Naive thymus-derived CD4-positive, alpha-beta T cell (primary cell): ENCODE measurements at regions of chr3 and their contacts with region 1.

Region 1: DNA sequence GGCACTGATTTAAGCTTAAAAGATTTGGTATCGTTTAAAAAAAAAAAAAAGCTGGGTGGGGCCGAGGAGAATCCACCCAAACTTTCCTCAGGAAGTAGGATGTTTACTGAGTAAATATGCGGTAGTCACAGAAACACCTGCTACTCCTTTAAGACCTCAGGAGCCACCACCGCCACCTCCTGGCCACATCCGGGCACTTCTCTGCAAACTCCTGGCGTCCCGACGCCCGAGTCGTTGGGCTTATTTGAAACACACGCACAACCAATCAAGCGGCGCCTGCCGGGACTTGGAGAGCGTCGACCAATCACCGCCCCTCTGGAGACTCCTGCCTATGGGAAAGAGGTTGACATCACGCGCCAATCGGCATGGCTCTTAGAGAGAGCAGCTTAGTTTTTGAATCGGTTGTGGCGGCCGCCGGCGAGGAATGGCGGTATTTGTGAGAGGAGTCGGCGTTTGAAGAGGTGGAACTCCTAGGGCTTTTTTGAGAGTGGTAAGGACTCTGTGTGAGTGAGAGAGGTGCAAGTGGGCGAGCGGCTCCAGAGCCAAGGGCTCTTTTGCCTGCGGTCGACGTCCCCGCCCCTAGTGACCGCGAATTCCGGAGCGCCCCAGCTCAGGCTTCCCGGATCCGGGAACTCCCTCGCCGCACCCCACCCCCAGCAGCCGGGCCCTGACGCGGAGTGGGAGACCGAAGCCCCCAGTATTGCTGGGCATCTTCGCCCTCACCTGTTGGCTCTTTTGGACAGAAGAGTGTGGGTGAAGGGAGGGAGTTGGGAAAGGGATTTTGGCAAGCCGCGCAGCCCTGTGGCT is at the start of gene ECT2:
- DNase-seq: peak; percentile 87 to 98 (median 94)
- ATAC-seq: peak; percentile 98
- H3K4me3 ChIP-seq: peak within 1 kb of the TSS; percentile 88
- H3K4me3 Mint-ChIP-seq: peak within 1 kb of the TSS; percentile 88 to 100 (median 96)
- H3K27ac ChIP-seq: peak within 1 kb of the TSS; percentile 63
- H3K27ac Mint-ChIP-seq: peak within 1 kb of the TSS; percentile 52 to 98 (median 85)
- H3K4me1 ChIP-seq: peaks cover 5% of the 10 kb centered on the region in 2 donors
- H3K4me1 Mint-ChIP-seq: peaks cover 6 to 45% (median 15%) of the 10 kb centered on the region in 7 donors
- H3K27me3 ChIP-seq: no peaks in the 10 kb centered on the region
- H3K27me3 Mint-ChIP-seq: peaks cover 0 to 8% (median 0%) of the 10 kb centered on the region in 5 donors
- total RNA-seq, gene ECT2: 1.3 to 41.2 (median 2.1) TPM

Region 2: GRCh38 chr3:170908235-170909116 is 1842.1 kb before region 1 on chr3 and contains the start of gene EIF5A2:
- CTCF ChIA-PET with region 1: no interaction called
- POLR2A ChIA-PET with region 1: no interaction called
- intact Hi-C with region 1: loop called (anchors 1 kb)
- DNase-seq: peak; percentile 87 to 97 (median 94)
- ATAC-seq: peak; percentile 98
- H3K4me3 ChIP-seq: peak within 1 kb of the TSS; percentile 50
- H3K4me3 Mint-ChIP-seq: peak within 1 kb of the TSS; percentile 90 to 98 (median 96)
- H3K27ac ChIP-seq: peak within 1 kb of the TSS; percentile 68
- H3K27ac Mint-ChIP-seq: peak within 1 kb of the TSS; percentile 89 to 96 (median 94)
- H3K4me1 ChIP-seq: peaks cover 15 to 16% of the 10 kb centered on the region in 2 donors
- H3K4me1 Mint-ChIP-seq: peaks cover 0 to 31% (median 22%) of the 10 kb centered on the region in 7 donors
- H3K27me3 ChIP-seq: no peaks in the 10 kb centered on the region
- H3K27me3 Mint-ChIP-seq: peaks cover 0 to 19% (median 0%) of the 10 kb centered on the region in 5 donors
- total RNA-seq, gene EIF5A2: 5.5 to 9.8 (median 7.4) TPM

Region 3: GRCh38 chr3:172511783-172512762 is 238.5 kb before region 1 on chr3:
- CTCF ChIA-PET with region 1: no interaction called
- POLR2A ChIA-PET with region 1: no interaction called
- intact Hi-C with region 1: loop called in 1 of 2 experiments (anchors 1 kb)
- DNase-seq: peak in 7 of 9 donors; percentile 28 to 76 (median 48)
- ATAC-seq: peak; percentile 87
- H3K4me3 ChIP-seq: peak overlapping the region; percentile 2
- H3K4me3 Mint-ChIP-seq: peak overlapping the region; percentile 62 to 93 (median 80)
- H3K27ac ChIP-seq: peak overlapping the region; percentile 61
- H3K27ac Mint-ChIP-seq: peak overlapping the region; percentile 88 to 100 (median 93)
- H3K4me1 ChIP-seq: peaks cover 52 to 56% of the 10 kb centered on the region in 2 donors
- H3K4me1 Mint-ChIP-seq: peaks cover 65 to 91% (median 84%) of the 10 kb centered on the region in 7 donors
- H3K27me3 ChIP-seq: no peaks in the 10 kb centered on the region
- H3K27me3 Mint-ChIP-seq: no peaks in the 10 kb centered on the region

Region 4: DNA sequence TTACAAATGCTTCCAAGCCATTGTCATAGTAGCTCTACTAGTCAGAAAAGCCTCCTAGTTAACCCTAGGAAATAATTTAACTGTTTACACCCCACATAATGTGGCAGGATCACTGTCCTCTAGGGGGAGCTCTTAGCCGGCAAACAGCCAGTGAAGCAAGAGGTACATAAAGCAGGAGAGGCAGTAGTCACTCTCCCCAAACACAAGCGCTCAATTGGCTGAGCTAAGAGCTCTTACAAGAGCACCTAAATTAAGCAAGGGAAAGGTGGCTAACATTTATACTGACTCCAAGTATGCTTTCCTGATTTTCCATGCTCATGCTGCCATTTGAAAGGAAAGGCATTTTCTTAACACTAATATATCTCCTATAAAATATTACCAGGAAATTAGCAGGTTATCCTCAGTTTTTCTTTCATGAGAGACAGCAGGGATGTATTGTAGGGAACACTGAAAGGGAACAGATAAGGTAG is 77.3 kb before region 1 on chr3:
- CTCF ChIA-PET with region 1: no interaction called
- POLR2A ChIA-PET with region 1: no interaction called
- intact Hi-C with region 1: loop called (anchors 1 kb)
- DNase-seq: peak; percentile 10 to 61 (median 27)
- ATAC-seq: peak; percentile 70
- H3K4me3 ChIP-seq: no peak overlapping the region
- H3K4me3 Mint-ChIP-seq: no peak overlapping the region
- H3K27ac ChIP-seq: no peak overlapping the region
- H3K27ac Mint-ChIP-seq: no peak overlapping the region
- H3K4me1 ChIP-seq: no peaks in the 10 kb centered on the region
- H3K4me1 Mint-ChIP-seq: peaks cover 0 to 21% (median 2%) of the 10 kb centered on the region in 7 donors
- H3K27me3 ChIP-seq: no peaks in the 10 kb centered on the region
- H3K27me3 Mint-ChIP-seq: no peaks in the 10 kb centered on the region

Region 5: DNA sequence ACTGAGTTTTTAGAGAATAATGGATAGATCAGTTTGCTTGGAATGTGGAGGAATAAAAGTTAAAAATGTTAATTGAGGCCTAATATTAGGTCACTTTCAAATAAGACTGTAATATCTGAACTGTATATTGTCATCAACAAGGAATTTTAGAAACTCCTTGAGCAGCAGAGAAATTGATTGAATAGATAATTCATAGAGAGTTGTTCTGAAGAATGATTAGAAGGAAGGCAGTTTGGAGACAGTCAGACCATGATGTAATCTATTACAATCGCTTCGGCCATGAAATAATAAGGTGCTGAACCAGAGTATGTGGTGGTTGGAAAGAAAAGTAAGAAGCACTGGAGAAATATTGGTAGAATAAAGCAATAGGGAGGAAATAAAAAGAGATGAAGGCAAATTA is 15.7 kb after region 1 on chr3:
- CTCF ChIA-PET with region 1: no interaction called
- POLR2A ChIA-PET with region 1: no interaction called
- intact Hi-C with region 1: loop called in 1 of 2 experiments (anchors 1 kb)
- DNase-seq: no peak
- ATAC-seq: no peak
- H3K4me3 ChIP-seq: no peak overlapping the region
- H3K4me3 Mint-ChIP-seq: no peak overlapping the region
- H3K27ac ChIP-seq: no peak overlapping the region
- H3K27ac Mint-ChIP-seq: peak overlapping the region in 1 of 9 donors; percentile 1
- H3K4me1 ChIP-seq: no peaks in the 10 kb centered on the region
- H3K4me1 Mint-ChIP-seq: peaks cover 0 to 13% (median 0%) of the 10 kb centered on the region in 7 donors
- H3K27me3 ChIP-seq: no peaks in the 10 kb centered on the region
- H3K27me3 Mint-ChIP-seq: no peaks in the 10 kb centered on the region